ENCODE measurements at regions of chr7 and their contacts with region 1.

Region 1: GRCh38 chr7:114715907-114716306 is 206.0 kb upstream of the MDFIC start:
- DNase-seq: no peak
- H3K4me3 Mint-ChIP-seq: no peak overlapping the region
- H3K27ac Mint-ChIP-seq: no peak overlapping the region
- H3K4me1 Mint-ChIP-seq: peaks cover 7% of the 10 kb centered on the region
- H3K27me3 Mint-ChIP-seq: peaks cover 4% of the 10 kb centered on the region

Region 2: GRCh38 chr7:114777288-114777687 is 61.4 kb after region 1 on chr7:
- intact Hi-C with region 1: loop called (anchors 5 kb)
- DNase-seq: peak; percentile 3
- H3K4me3 Mint-ChIP-seq: no peak overlapping the region
- H3K27ac Mint-ChIP-seq: no peak overlapping the region
- H3K4me1 Mint-ChIP-seq: peaks cover 10% of the 10 kb centered on the region
- H3K27me3 Mint-ChIP-seq: peaks cover 2% of the 10 kb centered on the region

Region 3: DNA sequence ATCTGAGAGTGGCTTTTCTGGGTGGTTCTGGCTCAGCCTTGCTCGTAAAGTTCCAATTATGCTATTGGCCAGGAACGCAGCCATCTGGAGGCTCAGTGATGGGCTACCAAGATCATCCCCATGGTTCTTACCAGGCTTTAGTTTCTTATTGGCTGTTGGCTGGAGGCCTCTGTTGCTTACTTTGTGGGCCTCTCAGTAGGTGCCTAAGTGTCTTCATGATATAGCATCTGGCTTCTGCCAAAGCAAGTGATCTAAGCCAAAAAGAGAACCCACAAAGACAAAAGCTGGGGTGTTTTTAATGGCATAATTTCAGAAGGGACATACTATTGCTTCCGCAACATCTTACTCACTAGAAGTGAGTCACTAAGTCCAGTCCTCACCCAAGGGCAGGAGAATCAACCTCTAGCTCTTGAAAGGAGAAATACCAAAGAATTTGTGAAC is 74.0 kb after region 1 on chr7:
- intact Hi-C with region 1: loop called (anchors 5 kb)
- DNase-seq: peak; percentile 42
- H3K4me3 Mint-ChIP-seq: no peak overlapping the region
- H3K27ac Mint-ChIP-seq: peak overlapping the region; percentile 87
- H3K4me1 Mint-ChIP-seq: peaks cover 37% of the 10 kb centered on the region
- H3K27me3 Mint-ChIP-seq: no peaks in the 10 kb centered on the region

Measured in activated CD4-positive, alpha-beta T cell treated with anti-CD3 and anti-CD28 coated beads, Interleukin-2, amount 10 ng/mL, durations not matched to agents 24 days and 14 days (primary cell).